ENCODE measurements at regions of chr9 and their contacts with region 1.

Region 1: DNA sequence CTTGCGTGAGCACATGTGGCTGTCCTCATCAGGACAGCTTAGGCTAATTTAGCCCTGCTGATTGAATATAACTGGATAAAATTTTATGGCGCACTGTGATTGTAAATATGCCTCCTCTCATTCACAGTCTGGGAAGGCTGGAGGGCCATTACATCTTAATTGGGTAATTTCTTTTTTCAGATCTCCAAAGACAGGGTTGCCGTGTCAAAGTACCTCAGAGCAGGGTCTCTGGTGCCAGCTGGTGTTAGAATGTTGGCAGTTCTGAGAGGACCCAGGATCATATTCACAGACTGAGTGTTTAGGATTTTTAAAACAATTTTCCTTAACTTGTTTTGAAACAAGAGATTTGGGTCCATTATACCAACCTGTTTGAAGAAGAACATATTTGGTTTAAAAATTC is 455.7 kb upstream of the TLE4 start:
- DNase-seq: no peak
- H3K4me3 ChIP-seq: no peak overlapping the region
- H3K27ac ChIP-seq: no peak overlapping the region
- H3K4me1 ChIP-seq: no peaks in the 10 kb centered on the region
- H3K27me3 ChIP-seq: no peaks in the 10 kb centered on the region
- CTCF ChIP-seq: no peak

Region 2: GRCh38 chr9:78811622-78812276 is 304.3 kb before region 1 on chr9:
- CTCF ChIA-PET with region 1: no interaction called
- POLR2A ChIA-PET with region 1: no interaction called
- intact Hi-C with region 1: loop called (anchors 5 kb)
- DNase-seq: peak in 1 of 2 experiments; percentile 36
- H3K4me3 ChIP-seq: no peak overlapping the region
- H3K27ac ChIP-seq: no peak overlapping the region
- H3K4me1 ChIP-seq: no peaks in the 10 kb centered on the region
- H3K27me3 ChIP-seq: no peaks in the 10 kb centered on the region
- CTCF ChIP-seq: no peak

Measured in PC-9 (cell line).